CD4-positive, alpha-beta memory T cell (primary cell): ENCODE measurements at regions of chr12 and their contacts with region 1.

Region 1: DNA sequence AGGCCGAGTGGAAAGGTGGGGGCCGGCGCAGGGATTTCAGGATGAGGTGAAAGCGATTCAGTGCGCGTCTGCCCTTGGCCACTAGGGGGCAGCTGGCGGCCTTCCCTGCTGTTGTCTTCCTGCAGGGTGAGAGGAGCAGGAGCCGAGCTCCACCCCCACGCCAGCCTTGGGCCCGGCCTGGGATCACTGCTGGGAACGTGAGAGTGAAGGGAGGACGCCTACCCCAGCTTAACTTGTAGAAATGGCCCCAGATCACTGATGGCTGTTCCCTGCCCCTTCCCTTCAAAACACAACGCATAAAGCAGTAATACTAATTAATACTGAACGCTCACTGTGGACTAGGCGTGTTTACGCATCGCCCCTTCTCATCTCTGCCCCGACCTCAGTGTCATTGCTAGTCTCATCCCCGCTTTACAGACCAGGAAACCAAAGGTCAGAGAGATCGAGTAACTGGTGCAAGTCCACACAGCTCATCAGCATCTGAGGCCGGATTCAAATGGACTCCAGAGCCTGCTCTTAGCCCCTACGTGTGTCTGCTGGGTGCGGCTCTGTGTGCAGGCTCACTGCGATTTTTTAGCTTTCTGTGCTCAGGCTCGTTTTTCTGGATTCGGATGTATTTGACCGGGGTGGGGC is 24.3 kb downstream of the MVK start:
- DNase-seq: peak in 4 of 5 donors; percentile 44 to 47 (median 46)
- H3K4me3 ChIP-seq: no peak overlapping the region
- H3K4me3 Mint-ChIP-seq: peak overlapping the region in 3 of 8 donors; percentile 35 to 54 (median 40)
- H3K27ac ChIP-seq: no peak overlapping the region
- H3K27ac Mint-ChIP-seq: peak overlapping the region in 2 of 7 donors; percentile 50 to 86
- H3K4me1 ChIP-seq: peaks cover 24% of the 10 kb centered on the region
- H3K4me1 Mint-ChIP-seq: peaks cover 17 to 42% (median 26%) of the 10 kb centered on the region in 4 donors
- H3K27me3 ChIP-seq: no peaks in the 10 kb centered on the region
- H3K27me3 Mint-ChIP-seq: no peaks in the 10 kb centered on the region

Region 2: GRCh38 chr12:109418848-109419480 is 178.9 kb before region 1 on chr12:
- CTCF ChIA-PET with region 1: no interaction called
- POLR2A ChIA-PET with region 1: no interaction called
- intact Hi-C with region 1: no loop called
- DNase-seq: no peak
- H3K4me3 ChIP-seq: no peak overlapping the region
- H3K4me3 Mint-ChIP-seq: no peak overlapping the region
- H3K27ac ChIP-seq: no peak overlapping the region
- H3K27ac Mint-ChIP-seq: no peak overlapping the region
- H3K4me1 ChIP-seq: no peaks in the 10 kb centered on the region
- H3K4me1 Mint-ChIP-seq: no peaks in the 10 kb centered on the region
- H3K27me3 ChIP-seq: no peaks in the 10 kb centered on the region
- H3K27me3 Mint-ChIP-seq: peaks cover 15 to 21% of the 10 kb centered on the region in 2 donors

Region 3: GRCh38 chr12:109582658-109583057 is 15.3 kb before region 1 on chr12:
- CTCF ChIA-PET with region 1: interaction called, 45 read pairs
- POLR2A ChIA-PET with region 1: no interaction called
- intact Hi-C with region 1: no loop called
- DNase-seq: no peak
- H3K4me3 ChIP-seq: no peak overlapping the region
- H3K4me3 Mint-ChIP-seq: no peak overlapping the region
- H3K27ac ChIP-seq: no peak overlapping the region
- H3K27ac Mint-ChIP-seq: no peak overlapping the region
- H3K4me1 ChIP-seq: no peaks in the 10 kb centered on the region
- H3K4me1 Mint-ChIP-seq: no peaks in the 10 kb centered on the region
- H3K27me3 ChIP-seq: no peaks in the 10 kb centered on the region
- H3K27me3 Mint-ChIP-seq: no peaks in the 10 kb centered on the region

Region 4: GRCh38 chr12:109775172-109775881 is 177.4 kb after region 1 on chr12:
- CTCF ChIA-PET with region 1: interaction called, 63 read pairs
- POLR2A ChIA-PET with region 1: no interaction called
- intact Hi-C with region 1: no loop called
- DNase-seq: peak; percentile 56 to 68 (median 61)
- H3K4me3 ChIP-seq: no peak overlapping the region
- H3K4me3 Mint-ChIP-seq: no peak overlapping the region
- H3K27ac ChIP-seq: no peak overlapping the region
- H3K27ac Mint-ChIP-seq: no peak overlapping the region
- H3K4me1 ChIP-seq: no peaks in the 10 kb centered on the region
- H3K4me1 Mint-ChIP-seq: peaks cover 5 to 9% (median 6%) of the 10 kb centered on the region in 4 donors
- H3K27me3 ChIP-seq: no peaks in the 10 kb centered on the region
- H3K27me3 Mint-ChIP-seq: peaks cover 1 to 3% of the 10 kb centered on the region in 2 donors